Endothelial cell of umbilical vein (primary cell): ENCODE measurements at regions of chr12 and their contacts with region 1.

Region 1: DNA sequence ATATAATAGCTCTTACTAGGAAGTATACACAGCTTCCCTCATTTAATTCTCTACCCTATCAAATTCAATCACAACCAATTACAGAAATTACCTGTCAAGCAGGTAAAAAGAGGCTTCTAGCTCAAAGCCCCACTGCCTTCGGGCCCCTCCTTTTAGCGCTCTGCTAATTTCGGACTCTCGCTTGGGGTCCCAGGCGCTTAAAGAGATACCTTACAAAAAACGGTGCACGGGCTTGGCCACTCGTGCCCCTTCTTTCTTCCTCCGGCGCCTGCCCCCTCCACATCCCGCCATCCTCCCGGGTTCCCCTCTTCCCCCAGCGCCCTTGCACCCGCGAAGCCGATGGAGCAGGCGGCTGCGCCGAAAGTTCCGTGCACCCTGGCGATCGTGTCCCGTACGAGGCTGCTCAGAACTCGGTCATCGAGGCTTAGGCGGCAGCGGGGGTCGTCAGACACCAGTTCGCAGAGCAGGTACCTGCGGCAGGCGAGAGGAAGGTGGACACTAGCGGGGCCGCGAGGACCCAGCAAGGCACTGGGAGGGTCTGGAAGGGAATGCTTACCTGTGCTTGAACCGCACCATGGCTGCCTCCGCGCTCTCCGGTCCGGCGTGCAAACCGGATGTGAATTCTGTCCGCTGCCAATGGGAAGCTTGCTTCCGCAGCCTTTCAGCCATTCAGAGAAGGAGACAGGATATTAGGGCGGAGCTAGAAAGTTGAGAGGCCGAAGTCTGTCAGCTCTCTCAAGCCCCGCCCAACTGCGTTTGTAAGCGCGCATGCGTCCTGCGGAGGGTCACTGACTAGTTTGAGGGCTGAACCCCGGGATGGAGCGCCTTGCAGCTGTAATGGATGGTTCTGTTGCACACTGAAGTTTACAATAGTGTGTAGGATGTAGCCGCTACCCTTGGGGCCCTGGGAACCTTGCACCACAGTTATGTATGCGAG is at the start of gene POP5:
- DNase-seq: peak; percentile 97
- H3K4me3 ChIP-seq: peak within 1 kb of the TSS; percentile 48 to 98 (median 79)
- H3K27ac ChIP-seq: no peak within 1 kb of the TSS
- H3K4me1 ChIP-seq: peaks cover 13% of the 10 kb centered on the region
- H3K27me3 ChIP-seq: no peaks in the 10 kb centered on the region
- CTCF ChIP-seq: no peak
- POLR2A ChIP-seq: peak; percentile 71
- total RNA-seq, gene POP5: 25.7 and 30.5 TPM in 2 replicates

Region 2: DNA sequence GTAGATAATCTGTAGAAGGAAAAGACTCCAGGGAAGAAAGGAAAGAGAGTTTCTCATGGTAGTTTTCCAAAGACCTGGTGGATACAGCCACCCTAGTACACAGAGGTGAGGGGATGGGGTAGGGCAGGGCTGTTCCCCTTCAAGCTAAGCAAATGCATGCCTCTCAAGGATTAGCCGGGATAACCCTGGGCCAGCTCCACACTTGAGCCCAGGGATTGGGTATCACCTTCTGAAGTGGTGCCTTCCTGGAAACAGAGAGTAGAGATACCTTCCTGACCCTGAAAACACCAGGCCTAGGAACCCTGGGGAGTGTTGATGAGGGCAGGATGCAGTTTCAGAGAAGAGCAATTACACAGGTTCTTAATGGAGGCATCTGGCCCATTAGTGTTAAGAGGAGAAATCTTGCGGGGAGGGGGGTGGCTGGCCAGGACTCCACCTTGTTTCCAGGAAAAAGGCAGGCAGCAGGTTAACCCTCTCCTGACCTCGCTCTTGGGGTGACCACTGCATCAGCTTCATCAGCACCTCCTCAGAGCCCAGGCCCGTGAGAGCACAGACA is 1094.4 kb before region 1 on chr12:
- CTCF ChIA-PET with region 1: no interaction called
- POLR2A ChIA-PET with region 1: no interaction called
- dilution Hi-C with region 1: no loop called
- intact Hi-C with region 1: no loop called
- DNase-seq: no peak
- H3K4me3 ChIP-seq: no peak overlapping the region
- H3K27ac ChIP-seq: no peak overlapping the region
- H3K4me1 ChIP-seq: no peaks in the 10 kb centered on the region
- H3K27me3 ChIP-seq: no peaks in the 10 kb centered on the region
- CTCF ChIP-seq: no peak
- POLR2A ChIP-seq: no peak

Region 3: GRCh38 chr12:120457133-120457532 is 123.9 kb before region 1 on chr12:
- CTCF ChIA-PET with region 1: no interaction called
- POLR2A ChIA-PET with region 1: no interaction called
- dilution Hi-C with region 1: no loop called
- intact Hi-C with region 1: no loop called
- DNase-seq: no peak
- H3K4me3 ChIP-seq: no peak overlapping the region
- H3K27ac ChIP-seq: no peak overlapping the region
- H3K4me1 ChIP-seq: no peaks in the 10 kb centered on the region
- H3K27me3 ChIP-seq: no peaks in the 10 kb centered on the region
- CTCF ChIP-seq: peak in 1 of 2 donors; percentile 32
- POLR2A ChIP-seq: no peak

Region 4: DNA sequence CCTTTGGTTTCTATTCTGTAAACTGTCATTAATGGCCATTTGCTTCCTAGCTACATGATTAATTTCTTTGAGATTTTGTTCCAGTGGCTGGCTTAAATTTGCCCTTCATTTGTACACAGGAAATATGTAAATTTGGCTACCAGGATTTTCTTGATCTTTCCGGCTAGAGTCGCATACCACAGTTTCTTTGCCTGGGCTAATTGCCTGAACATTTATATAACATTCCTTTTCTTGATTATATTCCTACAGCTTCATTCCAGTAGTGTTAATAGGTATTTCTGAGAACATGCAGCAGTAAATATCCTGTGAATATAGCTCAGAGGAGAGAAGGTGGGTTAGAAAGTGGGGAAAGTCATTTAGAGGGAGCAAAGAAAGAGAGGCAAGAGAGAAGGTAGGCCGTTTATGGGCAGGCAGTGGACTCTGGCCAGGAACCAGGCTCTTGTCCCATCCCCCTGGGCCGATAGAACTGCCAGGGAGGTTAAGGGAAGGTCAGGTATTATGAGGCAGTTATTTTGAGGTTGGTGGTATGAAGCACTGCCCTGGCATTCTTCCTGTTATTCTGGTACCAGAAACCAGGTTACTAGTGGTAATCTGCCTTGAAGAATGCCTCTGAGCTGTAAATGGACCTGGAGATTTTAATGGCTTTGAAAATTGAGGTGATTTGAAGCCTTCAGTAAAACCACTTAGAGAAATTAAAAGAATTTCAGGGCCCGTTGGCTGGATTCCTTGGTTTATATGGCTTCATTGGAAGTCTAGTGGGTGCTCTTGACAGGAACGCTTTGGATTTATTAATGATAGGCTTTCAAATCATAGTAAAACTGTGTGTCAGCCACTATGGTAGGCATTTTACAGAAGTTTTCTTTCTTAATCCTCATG is 42.5 kb before region 1 on chr12:
- CTCF ChIA-PET with region 1: no interaction called
- POLR2A ChIA-PET with region 1: no interaction called
- dilution Hi-C with region 1: no loop called
- intact Hi-C with region 1: loop called (anchors 1 kb)
- DNase-seq: peak; percentile 90
- H3K4me3 ChIP-seq: peak overlapping the region in 1 of 3 experiments; percentile 60
- H3K27ac ChIP-seq: peak overlapping the region; percentile 26
- H3K4me1 ChIP-seq: peaks cover 52% of the 10 kb centered on the region
- H3K27me3 ChIP-seq: no peaks in the 10 kb centered on the region
- CTCF ChIP-seq: no peak
- POLR2A ChIP-seq: no peak

Region 5: DNA sequence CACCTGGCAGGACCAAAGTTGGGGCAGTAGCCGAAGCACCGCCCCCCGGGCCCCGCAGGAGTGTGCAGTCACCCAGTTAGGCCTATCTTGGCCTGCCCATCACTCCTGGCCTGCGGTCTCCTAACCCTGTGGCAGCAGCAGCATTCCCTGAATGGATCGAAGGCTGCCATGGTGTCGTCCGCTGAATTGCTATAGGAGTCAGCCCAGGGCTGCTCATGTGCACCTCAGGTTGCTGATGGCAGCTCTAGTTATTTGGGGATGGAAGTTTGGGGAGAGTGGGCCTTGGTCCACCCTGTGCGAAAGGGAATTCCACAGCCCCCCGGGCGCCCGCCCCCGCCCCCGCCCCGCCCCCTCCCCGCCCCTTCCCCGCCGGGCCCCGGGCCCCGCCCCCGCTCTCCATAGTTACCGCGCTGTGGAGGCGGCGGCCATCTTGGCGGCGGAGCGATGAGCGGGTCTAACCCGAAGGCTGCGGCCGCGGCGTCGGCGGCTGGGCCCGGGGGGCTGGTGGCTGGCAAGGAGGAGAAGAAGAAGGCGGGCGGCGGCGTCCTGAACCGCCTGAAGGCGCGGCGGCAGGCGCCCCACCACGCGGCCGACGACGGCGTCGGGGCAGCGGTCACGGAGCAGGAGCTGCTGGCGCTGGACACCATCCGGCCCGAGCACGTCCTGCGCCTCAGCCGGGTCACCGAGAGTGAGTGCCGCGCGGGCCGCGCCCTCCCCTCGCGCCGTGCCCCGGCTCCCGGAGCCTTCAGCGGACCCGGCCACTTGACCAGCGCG is 129.2 kb after region 1 on chr12 and contains the start of gene UNC119B:
- CTCF ChIA-PET with region 1: interaction called, 9 read pairs
- POLR2A ChIA-PET with region 1: no interaction called
- dilution Hi-C with region 1: no loop called
- intact Hi-C with region 1: loop called (anchors 1 kb)
- DNase-seq: peak; percentile 74
- H3K4me3 ChIP-seq: peak within 1 kb of the TSS; percentile 52 to 66 (median 56)
- H3K27ac ChIP-seq: peak within 1 kb of the TSS; percentile 37
- H3K4me1 ChIP-seq: peaks cover 13% of the 10 kb centered on the region
- H3K27me3 ChIP-seq: no peaks in the 10 kb centered on the region
- CTCF ChIP-seq: no peak
- POLR2A ChIP-seq: peak; percentile 69
- total RNA-seq, gene UNC119B: 26.8 and 33.7 TPM in 2 replicates

Region 6: DNA sequence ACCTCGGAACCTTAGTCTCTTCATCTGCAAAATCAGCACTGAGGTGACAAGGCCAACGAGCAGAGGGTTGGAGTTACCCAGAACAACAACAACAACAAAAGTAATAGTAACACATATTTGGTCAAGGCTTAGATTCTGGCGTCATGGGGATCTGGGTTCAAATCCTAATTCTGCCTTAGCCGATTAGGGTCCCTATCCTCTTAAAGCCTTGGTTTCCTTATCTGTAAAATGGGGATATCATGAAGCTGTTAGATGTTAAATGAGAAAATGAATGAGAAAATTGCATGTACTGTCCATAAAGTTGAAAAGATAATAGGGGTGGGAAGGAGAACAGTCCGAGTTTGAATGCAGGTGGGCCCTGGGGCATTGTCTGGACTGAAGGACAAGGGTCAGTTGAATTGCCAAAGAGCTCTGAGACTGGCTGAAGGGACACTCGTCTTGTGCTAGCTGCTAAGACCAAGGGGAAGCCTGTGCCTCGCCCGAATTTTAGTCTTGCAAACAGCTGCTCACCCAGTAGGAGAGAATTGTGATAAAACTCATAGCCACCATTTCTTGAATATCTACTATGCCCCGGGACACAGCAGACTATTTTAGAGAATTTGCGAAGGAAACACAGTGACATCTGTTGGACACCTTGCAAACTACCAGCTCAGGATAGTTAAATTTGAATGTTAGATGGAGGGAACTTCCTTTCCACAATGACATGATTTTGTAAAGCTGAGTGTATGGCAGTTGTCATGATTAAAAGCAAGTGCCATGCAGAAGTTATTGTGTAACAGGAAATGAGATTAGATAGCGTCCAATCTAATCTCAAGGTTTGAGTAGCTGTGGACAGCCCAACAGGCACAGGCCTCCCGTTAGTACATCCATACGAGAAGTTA is 390.5 kb after region 1 on chr12:
- CTCF ChIA-PET with region 1: interaction called, 99 read pairs
- POLR2A ChIA-PET with region 1: interaction called, 3 read pairs
- dilution Hi-C with region 1: no loop called
- intact Hi-C with region 1: loop called (anchors 1 kb)
- DNase-seq: peak; percentile 58
- H3K4me3 ChIP-seq: no peak overlapping the region
- H3K27ac ChIP-seq: no peak overlapping the region
- H3K4me1 ChIP-seq: no peaks in the 10 kb centered on the region
- H3K27me3 ChIP-seq: no peaks in the 10 kb centered on the region
- CTCF ChIP-seq: peak; percentile 54 to 58
- POLR2A ChIP-seq: no peak

Region 7: GRCh38 chr12:121110211-121110940 is 529.3 kb after region 1 on chr12:
- CTCF ChIA-PET with region 1: interaction called, 7 read pairs
- POLR2A ChIA-PET with region 1: no interaction called
- dilution Hi-C with region 1: no loop called
- intact Hi-C with region 1: loop called (anchors 1 kb)
- DNase-seq: peak; percentile 63
- H3K4me3 ChIP-seq: no peak overlapping the region
- H3K27ac ChIP-seq: no peak overlapping the region
- H3K4me1 ChIP-seq: no peaks in the 10 kb centered on the region
- H3K27me3 ChIP-seq: no peaks in the 10 kb centered on the region
- CTCF ChIP-seq: peak; percentile 80 to 92
- POLR2A ChIP-seq: no peak